ENCODE measurements at regions of chr13 and their contacts with region 1.

Region 1: DNA sequence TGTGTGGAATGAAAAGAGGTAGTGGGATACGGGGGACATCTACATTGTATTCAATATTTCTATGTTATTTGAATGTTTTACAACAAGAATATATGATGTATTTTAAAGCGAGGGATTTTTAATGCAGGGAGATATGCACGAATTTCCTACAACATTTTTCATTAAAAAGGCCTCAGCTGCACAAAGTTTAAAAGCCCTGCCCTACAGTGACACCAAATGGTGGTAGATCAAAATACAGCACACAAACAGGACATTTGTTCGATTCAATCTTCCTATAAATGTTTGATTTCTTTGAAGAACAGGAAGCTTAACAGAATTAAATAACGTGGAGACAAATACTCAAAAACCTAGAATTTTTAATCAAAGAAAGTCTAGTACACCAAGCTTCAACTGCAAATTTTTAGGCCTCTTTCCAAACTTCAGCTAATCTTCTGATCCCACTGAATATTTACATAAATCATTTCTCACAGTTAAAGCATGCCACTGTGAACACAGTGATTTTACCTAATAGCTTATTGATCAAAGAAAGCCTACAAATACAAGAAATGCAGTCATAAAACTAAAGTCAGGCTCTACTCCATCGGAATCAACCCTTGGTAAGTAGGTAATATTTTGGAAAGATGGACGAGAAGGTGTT is 257.2 kb downstream of the DIAPH3 start:
- DNase-seq: no peak
- H3K4me3 ChIP-seq: no peak overlapping the region
- CTCF ChIP-seq: peak; percentile 53

Region 2: GRCh38 chr13:59391696-59392095 is 514.8 kb before region 1 on chr13:
- CTCF ChIA-PET with region 1: interaction called, 30 read pairs
- POLR2A ChIA-PET with region 1: no interaction called
- DNase-seq: no peak
- H3K4me3 ChIP-seq: no peak overlapping the region
- CTCF ChIP-seq: peak; percentile 84

Region 3: DNA sequence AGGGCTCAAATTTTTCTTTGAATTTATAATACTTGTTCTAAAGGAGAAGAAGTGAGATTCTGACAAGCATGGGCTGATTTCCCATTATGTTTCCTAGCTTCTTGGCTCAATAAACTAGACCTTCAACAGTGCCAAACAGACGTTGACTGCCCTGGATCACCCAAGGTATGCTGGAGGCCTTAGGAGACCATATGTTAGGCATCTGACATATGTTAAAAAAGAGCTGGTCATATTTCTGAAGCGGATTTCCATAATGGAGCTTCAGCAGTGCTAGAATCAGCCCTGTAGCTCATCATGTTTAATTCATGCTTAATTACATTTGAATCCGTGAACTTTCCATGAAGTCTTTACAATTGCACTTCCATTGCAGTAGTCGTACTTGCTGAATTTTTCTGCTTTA is 396.1 kb before region 1 on chr13:
- CTCF ChIA-PET with region 1: no interaction called
- POLR2A ChIA-PET with region 1: no interaction called
- DNase-seq: no peak
- H3K4me3 ChIP-seq: no peak overlapping the region
- CTCF ChIP-seq: no peak

Region 4: GRCh38 chr13:59684105-59684504 is 222.4 kb before region 1 on chr13:
- CTCF ChIA-PET with region 1: interaction called, 25 read pairs
- POLR2A ChIA-PET with region 1: no interaction called
- DNase-seq: no peak
- H3K4me3 ChIP-seq: no peak overlapping the region
- CTCF ChIP-seq: no peak

Region 5: DNA sequence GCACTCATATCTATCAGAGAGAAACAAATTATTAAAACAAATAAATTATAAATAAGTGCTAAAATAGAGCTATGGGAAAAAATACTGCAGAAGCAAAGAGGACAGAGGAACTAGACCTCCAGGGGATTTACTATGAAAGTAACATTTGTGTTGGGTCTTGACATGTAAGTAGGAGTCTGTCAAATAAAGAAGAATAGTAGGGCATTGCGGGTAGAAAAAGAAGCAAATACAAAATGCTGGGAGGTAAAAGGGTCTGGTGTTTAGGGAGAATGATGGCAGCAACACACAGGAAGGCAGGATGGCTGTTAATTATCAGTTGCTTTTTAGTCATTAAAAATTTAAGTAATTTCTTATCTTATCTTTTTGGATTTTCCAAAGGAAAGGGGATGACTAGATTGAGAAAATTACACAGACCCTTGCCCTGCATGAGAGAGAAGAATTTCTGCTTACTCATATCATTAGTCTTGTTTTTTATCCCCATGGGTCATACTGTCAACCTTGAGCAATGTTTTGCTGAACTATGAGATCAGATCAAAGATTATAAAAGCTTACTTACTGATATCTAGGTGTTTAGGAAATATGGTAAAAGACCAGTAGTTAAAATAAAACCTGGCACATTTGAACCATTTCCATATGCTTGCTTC is 215.6 kb before region 1 on chr13:
- CTCF ChIA-PET with region 1: interaction called, 14 read pairs
- POLR2A ChIA-PET with region 1: no interaction called
- DNase-seq: no peak
- H3K4me3 ChIP-seq: no peak overlapping the region
- CTCF ChIP-seq: no peak

Region 6: GRCh38 chr13:59776924-59777690 is 129.4 kb before region 1 on chr13:
- CTCF ChIA-PET with region 1: interaction called, 23 read pairs
- POLR2A ChIA-PET with region 1: no interaction called
- DNase-seq: peak; percentile 60
- H3K4me3 ChIP-seq: no peak overlapping the region
- CTCF ChIP-seq: no peak

Region 7: GRCh38 chr13:59885076-59885475 is 21.5 kb before region 1 on chr13:
- CTCF ChIA-PET with region 1: interaction called, 10 read pairs
- POLR2A ChIA-PET with region 1: interaction called, 3 read pairs
- DNase-seq: no peak
- H3K4me3 ChIP-seq: no peak overlapping the region
- CTCF ChIP-seq: no peak